HEK293 (cell line): ENCODE measurements at regions of chr4 and their contacts with region 1.

Region 1: GRCh38 chr4:4384837-4385236 is 2.1 kb upstream of the NSG1 start:
- H3K4me3 ChIP-seq: no peak overlapping the region
- H3K27ac ChIP-seq: no peak overlapping the region
- H3K4me1 ChIP-seq: no peaks in the 10 kb centered on the region
- CTCF ChIP-seq: peak; percentile 28; the same call in 1 of the 2 replicates

Region 2: GRCh38 chr4:4269856-4270255 is 115.0 kb before region 1 on chr4:
- CTCF ChIA-PET with region 1: no interaction called
- POLR2A ChIA-PET with region 1: no interaction called
- H3K4me3 ChIP-seq: no peak overlapping the region
- H3K27ac ChIP-seq: no peak overlapping the region
- H3K4me1 ChIP-seq: no peaks in the 10 kb centered on the region
- CTCF ChIP-seq: no peak

Region 3: DNA sequence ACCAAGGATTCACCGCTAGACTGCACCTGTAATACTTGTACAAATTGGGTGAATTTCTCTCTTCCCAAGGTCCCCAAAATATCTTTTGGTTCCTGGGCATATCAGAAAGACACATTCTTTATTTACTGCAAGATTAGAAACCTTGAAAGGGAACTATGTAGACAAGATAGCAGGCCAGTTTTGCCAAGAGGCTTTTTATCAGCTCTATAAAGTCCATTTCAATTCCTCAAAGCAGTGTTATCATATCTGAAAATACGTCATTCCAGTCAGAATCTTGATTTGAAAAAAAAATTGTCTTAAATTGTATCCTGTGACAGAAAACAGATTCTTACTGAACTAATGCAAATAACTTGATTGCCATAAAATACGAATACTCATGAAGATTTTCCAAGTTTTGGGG is 35.0 kb before region 1 on chr4:
- CTCF ChIA-PET with region 1: no interaction called
- POLR2A ChIA-PET with region 1: no interaction called
- H3K4me3 ChIP-seq: no peak overlapping the region
- H3K27ac ChIP-seq: no peak overlapping the region
- H3K4me1 ChIP-seq: no peaks in the 10 kb centered on the region
- CTCF ChIP-seq: no peak

Region 4: GRCh38 chr4:4430492-4431197 is 45.8 kb after region 1 on chr4:
- CTCF ChIA-PET with region 1: interaction called, 17 read pairs
- POLR2A ChIA-PET with region 1: no interaction called
- H3K4me3 ChIP-seq: no peak overlapping the region
- H3K27ac ChIP-seq: no peak overlapping the region
- H3K4me1 ChIP-seq: no peaks in the 10 kb centered on the region
- CTCF ChIP-seq: no peak

Region 5: DNA sequence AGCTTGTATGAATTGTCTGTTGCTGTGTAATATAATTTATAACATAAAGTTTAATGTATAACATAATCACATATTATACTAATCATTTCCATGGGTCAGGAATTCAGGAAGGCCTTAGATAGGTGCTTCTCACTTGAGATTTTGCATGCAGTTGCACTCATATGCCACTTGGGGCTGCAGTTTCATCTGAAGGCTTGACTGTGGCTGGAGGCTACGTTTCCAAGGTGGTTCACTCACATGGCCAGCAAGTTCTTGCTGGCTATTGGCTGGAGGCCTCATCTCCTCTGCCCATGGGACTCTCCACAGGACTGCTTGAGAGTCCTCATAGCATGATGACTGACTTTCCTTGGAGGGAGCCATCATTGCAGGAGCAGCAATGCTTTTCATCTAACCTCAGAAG is 210.4 kb after region 1 on chr4:
- CTCF ChIA-PET with region 1: no interaction called
- POLR2A ChIA-PET with region 1: no interaction called
- H3K4me3 ChIP-seq: no peak overlapping the region
- H3K27ac ChIP-seq: no peak overlapping the region
- H3K4me1 ChIP-seq: no peaks in the 10 kb centered on the region
- CTCF ChIP-seq: no peak